ENCODE measurements at regions of chr4 and their contacts with region 1.

Region 1: DNA sequence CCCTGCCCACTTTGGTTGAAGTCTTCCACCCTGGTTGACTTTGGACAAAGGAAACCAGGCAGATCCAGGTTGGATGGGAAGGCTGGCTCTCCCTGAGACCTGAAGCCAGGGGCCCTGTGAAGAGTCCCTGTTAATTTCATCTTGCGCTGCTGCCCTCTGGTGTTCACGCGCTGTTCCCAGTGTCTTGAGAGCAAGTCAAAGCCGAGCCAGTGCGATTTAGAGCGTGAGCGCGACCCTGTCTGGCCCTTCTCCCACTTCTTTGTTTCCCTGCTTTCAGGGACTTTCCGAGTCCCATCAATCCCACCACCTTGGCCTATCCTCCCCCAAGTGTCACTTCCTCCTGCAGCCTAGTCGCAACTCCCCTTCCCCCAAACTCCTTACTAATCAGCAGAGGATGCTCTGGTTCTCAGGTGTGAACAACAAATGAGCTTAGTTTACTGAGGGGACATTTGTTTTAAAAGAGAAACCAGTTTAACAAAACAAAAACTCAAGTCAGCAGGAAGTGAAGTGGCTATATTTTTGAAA is 25.8 kb upstream of the CHRNA9 start:
- DNase-seq: peak; percentile 78 to 93 (median 86)
- ATAC-seq: peak; percentile 58 to 91 (median 90)
- H3K4me3 ChIP-seq: peak overlapping the region in 1 of 12 donors; percentile 2
- H3K27ac ChIP-seq: peak overlapping the region in 1 of 12 donors; percentile 85
- H3K4me1 ChIP-seq: peaks cover 0 to 61% (median 2%) of the 10 kb centered on the region in 12 donors
- H3K27me3 ChIP-seq: peaks cover 0 to 5% (median 0%) of the 10 kb centered on the region in 9 donors
- CTCF ChIP-seq: peak; percentile 81 to 94 (median 86)
- POLR2A ChIP-seq: no peak

Region 2: GRCh38 chr4:39469429-39470077 is 839.8 kb before region 1 on chr4:
- intact Hi-C with region 1: loop called in 1 of 10 experiments (anchors 5 kb)
- DNase-seq: no peak
- ATAC-seq: peak; percentile 47 to 84 (median 76)
- H3K4me3 ChIP-seq: peak overlapping the region in 1 of 12 donors; percentile 28
- H3K27ac ChIP-seq: peak overlapping the region in 6 of 12 donors; percentile 11 to 82 (median 22)
- H3K4me1 ChIP-seq: peaks cover 0 to 10% (median 0%) of the 10 kb centered on the region in 12 donors
- H3K27me3 ChIP-seq: no peaks in the 10 kb centered on the region
- CTCF ChIP-seq: peak; percentile 63 to 89 (median 80)
- POLR2A ChIP-seq: no peak

Region 3: GRCh38 chr4:40056716-40057585 is 252.4 kb before region 1 on chr4 and contains the start of gene N4BP2:
- intact Hi-C with region 1: loop called (anchors 1 to 10 kb)
- DNase-seq: peak; percentile 86 to 93 (median 87)
- ATAC-seq: peak; percentile 60 to 86 (median 84)
- H3K4me3 ChIP-seq: peak within 1 kb of the TSS; percentile 73 to 100 (median 92)
- H3K27ac ChIP-seq: peak within 1 kb of the TSS; percentile 98 to 100 (median 100)
- H3K4me1 ChIP-seq: peaks cover 0 to 27% (median 12%) of the 10 kb centered on the region in 12 donors
- H3K27me3 ChIP-seq: no peaks in the 10 kb centered on the region
- CTCF ChIP-seq: peak; percentile 40 to 95 (median 76)
- POLR2A ChIP-seq: peak; percentile 56 to 91
- total RNA-seq, gene N4BP2: 3.5 to 6.8 (median 5.0) TPM

Region 4: DNA sequence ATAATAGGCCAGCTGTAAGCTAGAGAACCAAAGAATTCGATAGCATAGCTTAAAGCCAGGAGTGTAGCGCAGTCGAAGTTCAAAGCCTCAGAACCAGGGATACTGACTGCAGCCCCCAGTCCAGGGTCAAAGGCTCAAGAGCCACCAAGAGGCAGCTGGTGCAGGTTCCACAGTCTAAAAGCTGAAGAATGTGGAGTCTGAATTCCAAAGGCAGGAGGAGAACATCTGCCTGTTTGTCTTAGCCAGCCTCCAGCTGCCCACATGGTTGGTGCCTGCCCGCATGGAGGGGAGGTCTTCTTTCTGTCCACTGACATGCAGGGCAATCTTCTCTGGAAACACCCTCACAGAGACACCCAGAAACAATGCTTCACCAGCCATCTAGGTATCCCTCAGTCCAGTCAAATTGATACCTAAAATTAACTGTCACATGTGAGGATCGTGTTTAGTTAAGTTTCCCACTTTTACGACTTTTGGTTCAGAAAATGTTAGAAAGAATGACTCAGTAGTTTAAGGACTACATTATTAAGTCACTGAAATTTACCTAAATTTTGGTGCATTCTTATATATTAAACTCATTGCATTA is 165.3 kb before region 1 on chr4:
- intact Hi-C with region 1: loop called in 1 of 10 experiments (anchors 2 kb)
- DNase-seq: no peak
- ATAC-seq: no peak
- H3K4me3 ChIP-seq: no peak overlapping the region
- H3K27ac ChIP-seq: no peak overlapping the region
- H3K4me1 ChIP-seq: no peaks in the 10 kb centered on the region
- H3K27me3 ChIP-seq: no peaks in the 10 kb centered on the region
- CTCF ChIP-seq: no peak
- POLR2A ChIP-seq: no peak

Region 5: DNA sequence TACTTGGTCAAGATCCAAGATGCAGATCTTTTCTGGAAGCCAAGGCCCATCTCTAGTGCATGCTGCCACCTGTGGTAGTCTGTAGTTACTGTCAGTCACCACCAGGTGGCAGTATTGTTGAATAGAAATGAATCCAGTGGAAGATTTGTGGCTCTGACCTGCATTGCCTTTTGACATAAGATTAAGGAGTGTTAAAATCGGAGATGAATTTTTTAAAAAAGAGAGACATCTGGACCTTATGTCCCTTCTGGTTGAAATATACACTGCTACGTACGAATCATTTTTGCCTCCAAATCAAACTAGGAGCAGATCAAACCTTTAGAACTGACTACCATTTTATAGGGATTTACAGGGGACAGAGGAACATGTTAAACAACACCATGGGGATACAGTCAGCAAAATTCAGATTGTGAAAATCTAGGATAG is 159.3 kb before region 1 on chr4:
- intact Hi-C with region 1: loop called (anchors 1 to 5 kb)
- DNase-seq: peak in 4 of 5 donors; percentile 35 to 45 (median 38)
- ATAC-seq: peak in 3 of 4 donors; percentile 61 to 73 (median 69)
- H3K4me3 ChIP-seq: no peak overlapping the region
- H3K27ac ChIP-seq: no peak overlapping the region
- H3K4me1 ChIP-seq: peaks cover 0 to 6% (median 0%) of the 10 kb centered on the region in 12 donors
- H3K27me3 ChIP-seq: no peaks in the 10 kb centered on the region
- CTCF ChIP-seq: peak; percentile 73 to 94 (median 85)
- POLR2A ChIP-seq: no peak

Region 6: DNA sequence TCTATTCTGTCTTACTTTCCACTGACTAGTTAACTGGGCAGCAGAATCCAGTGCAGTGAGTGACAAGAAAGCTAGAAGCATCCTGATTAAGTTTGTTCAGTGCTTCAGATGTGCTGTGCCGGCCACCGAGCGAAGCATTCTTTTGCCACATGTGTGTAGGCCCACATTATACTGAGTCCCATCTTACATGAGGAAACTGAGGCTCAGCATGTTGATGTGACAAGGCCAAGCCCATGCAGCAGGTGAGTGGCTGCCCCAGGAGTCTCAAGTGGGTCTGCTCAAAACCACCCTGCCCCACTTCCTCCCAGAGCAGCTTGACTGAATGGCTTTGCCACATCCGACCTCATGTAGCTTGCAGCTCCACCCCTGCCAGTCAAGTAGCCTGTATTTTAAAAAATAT is 62.0 kb before region 1 on chr4:
- intact Hi-C with region 1: loop called in 1 of 10 experiments (anchors 10 kb)
- DNase-seq: no peak
- ATAC-seq: no peak
- H3K4me3 ChIP-seq: no peak overlapping the region
- H3K27ac ChIP-seq: peak overlapping the region in 1 of 12 donors; percentile 48
- H3K4me1 ChIP-seq: peaks cover 0 to 29% (median 0%) of the 10 kb centered on the region in 12 donors
- H3K27me3 ChIP-seq: no peaks in the 10 kb centered on the region
- CTCF ChIP-seq: no peak
- POLR2A ChIP-seq: no peak

Measured in heart left ventricle (tissue), 16 donors.